CD4-positive, alpha-beta memory T cell (primary cell): ENCODE measurements at regions of chr3 and their contacts with region 1.

Region 1: GRCh38 chr3:193592944-193593667 is at the start of gene OPA1:
- DNase-seq: peak; percentile 85 to 89 (median 86)
- H3K4me3 ChIP-seq: peak within 1 kb of the TSS; percentile 86 to 88
- H3K4me3 Mint-ChIP-seq: peak within 1 kb of the TSS; percentile 92 to 99 (median 97)
- H3K27ac ChIP-seq: peak within 1 kb of the TSS; percentile 76
- H3K27ac Mint-ChIP-seq: peak within 1 kb of the TSS; percentile 92 to 99 (median 98)
- H3K4me1 ChIP-seq: peaks cover 34% of the 10 kb centered on the region
- H3K4me1 Mint-ChIP-seq: peaks cover 38 to 58% (median 49%) of the 10 kb centered on the region in 4 donors
- H3K27me3 ChIP-seq: no peaks in the 10 kb centered on the region
- H3K27me3 Mint-ChIP-seq: no peaks in the 10 kb centered on the region
- total RNA-seq, gene OPA1: 51.5 to 59.8 TPM

Region 2: GRCh38 chr3:193605876-193606275 is 12.8 kb after region 1 on chr3:
- CTCF ChIA-PET with region 1: no interaction called
- POLR2A ChIA-PET with region 1: interaction called, 4 read pairs
- intact Hi-C with region 1: loop called (anchors 1 kb)
- DNase-seq: peak; percentile 45 to 57 (median 53)
- H3K4me3 ChIP-seq: no peak overlapping the region
- H3K4me3 Mint-ChIP-seq: no peak overlapping the region
- H3K27ac ChIP-seq: no peak overlapping the region
- H3K27ac Mint-ChIP-seq: peak overlapping the region in 1 of 7 donors; percentile 70
- H3K4me1 ChIP-seq: peaks cover 24% of the 10 kb centered on the region
- H3K4me1 Mint-ChIP-seq: peaks cover 18 to 70% (median 43%) of the 10 kb centered on the region in 4 donors
- H3K27me3 ChIP-seq: no peaks in the 10 kb centered on the region
- H3K27me3 Mint-ChIP-seq: no peaks in the 10 kb centered on the region

Region 3: DNA sequence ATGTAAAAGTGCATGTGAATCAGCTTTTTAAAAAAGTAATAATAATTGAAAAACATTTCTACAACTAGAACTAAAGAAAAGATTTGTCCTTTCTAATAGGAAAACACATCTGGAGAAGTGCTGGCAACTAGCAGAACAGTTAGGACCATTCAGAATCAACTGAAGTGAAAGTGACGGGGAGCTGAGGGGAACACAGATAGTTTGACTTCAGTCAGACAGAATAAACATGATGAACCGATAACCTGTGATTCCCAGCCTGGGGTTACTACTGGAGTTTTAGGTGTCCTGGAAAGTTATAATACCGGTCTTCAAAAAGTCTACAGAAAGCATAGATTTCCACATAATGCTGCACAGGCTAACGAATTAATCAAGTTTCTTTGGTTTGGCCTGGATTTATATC is 28.0 kb after region 1 on chr3:
- CTCF ChIA-PET with region 1: no interaction called
- POLR2A ChIA-PET with region 1: no interaction called
- intact Hi-C with region 1: no loop called
- DNase-seq: no peak
- H3K4me3 ChIP-seq: no peak overlapping the region
- H3K4me3 Mint-ChIP-seq: no peak overlapping the region
- H3K27ac ChIP-seq: no peak overlapping the region
- H3K27ac Mint-ChIP-seq: no peak overlapping the region
- H3K4me1 ChIP-seq: no peaks in the 10 kb centered on the region
- H3K4me1 Mint-ChIP-seq: peaks cover 0 to 8% (median 2%) of the 10 kb centered on the region in 4 donors
- H3K27me3 ChIP-seq: no peaks in the 10 kb centered on the region
- H3K27me3 Mint-ChIP-seq: no peaks in the 10 kb centered on the region